ENCODE measurements at regions of chr14 and their contacts with region 1.

Region 1: DNA sequence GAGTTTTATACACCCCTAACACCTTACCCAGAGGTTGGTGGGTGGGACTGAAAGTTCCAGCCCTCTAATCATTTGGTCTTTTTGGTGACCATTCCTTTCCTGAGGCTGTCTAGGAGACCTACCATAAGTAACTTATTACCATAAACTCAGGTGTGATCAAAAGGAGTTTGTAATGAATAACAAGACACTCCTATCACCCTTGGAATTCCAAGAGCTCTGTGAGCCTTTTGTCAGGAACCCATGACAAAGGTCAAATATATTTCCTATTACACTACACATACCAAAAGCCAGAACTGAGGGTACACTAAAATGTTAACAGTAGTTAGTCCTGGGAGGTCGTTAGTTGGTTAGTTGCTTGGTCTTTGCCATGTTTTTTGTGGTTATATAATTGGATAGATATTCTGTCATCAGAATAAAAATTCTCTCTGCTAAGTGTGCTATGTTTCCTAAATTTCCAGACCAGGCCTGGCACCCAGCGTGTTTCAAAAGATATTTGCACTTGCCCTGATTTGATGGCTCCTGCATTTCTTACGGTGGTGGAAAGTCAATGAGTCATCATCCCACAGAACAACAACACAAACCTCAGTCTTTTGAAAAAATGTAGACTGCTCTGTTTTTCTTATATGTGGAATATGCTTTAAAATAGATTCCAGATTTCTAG is 27.0 kb upstream of the AKAP5 start:
- DNase-seq: peak; percentile 74 to 77
- H3K4me3 ChIP-seq: no peak overlapping the region
- H3K4me3 Mint-ChIP-seq: peak overlapping the region; percentile 58
- H3K27ac Mint-ChIP-seq: peak overlapping the region; percentile 84
- H3K4me1 ChIP-seq: peaks cover 53% of the 10 kb centered on the region
- H3K4me1 Mint-ChIP-seq: peaks cover 15% of the 10 kb centered on the region
- H3K27me3 ChIP-seq: no peaks in the 10 kb centered on the region
- H3K27me3 Mint-ChIP-seq: no peaks in the 10 kb centered on the region
- CTCF ChIP-seq: no peak

Region 2: GRCh38 chr14:64465191-64465822 is 27.0 kb after region 1 on chr14 and contains the start of gene AKAP5:
- CTCF ChIA-PET with region 1: no interaction called
- POLR2A ChIA-PET with region 1: no interaction called
- intact Hi-C with region 1: loop called (anchors 2 kb)
- DNase-seq: peak; percentile 83 to 94
- H3K4me3 ChIP-seq: peak within 1 kb of the TSS; percentile 97
- H3K4me3 Mint-ChIP-seq: peak within 1 kb of the TSS; percentile 96
- H3K27ac Mint-ChIP-seq: peak within 1 kb of the TSS; percentile 93
- H3K4me1 ChIP-seq: peaks cover 30% of the 10 kb centered on the region
- H3K4me1 Mint-ChIP-seq: peaks cover 10% of the 10 kb centered on the region
- H3K27me3 ChIP-seq: no peaks in the 10 kb centered on the region
- H3K27me3 Mint-ChIP-seq: no peaks in the 10 kb centered on the region
- CTCF ChIP-seq: no peak
- total RNA-seq, gene AKAP5: 15.0 and 15.9 TPM in 2 replicates

Measured in Caco-2 (cell line).